Pancreas (tissue), 10 donors: ENCODE measurements at regions of chr3 and their contacts with region 1.

Region 1: GRCh38 chr3:42090973-42091731 is at the start of gene TRAK1:
- DNase-seq: no peak
- ATAC-seq: peak in 1 of 4 donors; percentile 37
- H3K4me3 ChIP-seq: no peak within 1 kb of the TSS
- H3K27ac ChIP-seq: no peak within 1 kb of the TSS
- H3K4me1 ChIP-seq: no peaks in the 10 kb centered on the region
- H3K27me3 ChIP-seq: no peaks in the 10 kb centered on the region
- CTCF ChIP-seq: no peak
- total RNA-seq, gene TRAK1: 9.3 to 24.3 (median 11.7) TPM

Region 2: GRCh38 chr3:41893977-41894376 is 197.2 kb before region 1 on chr3:
- intact Hi-C with region 1: loop called in 1 of 3 experiments (anchors 10 kb)
- DNase-seq: peak in 1 of 6 donors; percentile 10
- ATAC-seq: peak in 2 of 4 donors; percentile 42 to 67
- H3K4me3 ChIP-seq: no peak overlapping the region
- H3K27ac ChIP-seq: no peak overlapping the region
- H3K4me1 ChIP-seq: no peaks in the 10 kb centered on the region
- H3K27me3 ChIP-seq: no peaks in the 10 kb centered on the region
- CTCF ChIP-seq: peak in 2 of 4 donors; percentile 14 to 22

Region 3: DNA sequence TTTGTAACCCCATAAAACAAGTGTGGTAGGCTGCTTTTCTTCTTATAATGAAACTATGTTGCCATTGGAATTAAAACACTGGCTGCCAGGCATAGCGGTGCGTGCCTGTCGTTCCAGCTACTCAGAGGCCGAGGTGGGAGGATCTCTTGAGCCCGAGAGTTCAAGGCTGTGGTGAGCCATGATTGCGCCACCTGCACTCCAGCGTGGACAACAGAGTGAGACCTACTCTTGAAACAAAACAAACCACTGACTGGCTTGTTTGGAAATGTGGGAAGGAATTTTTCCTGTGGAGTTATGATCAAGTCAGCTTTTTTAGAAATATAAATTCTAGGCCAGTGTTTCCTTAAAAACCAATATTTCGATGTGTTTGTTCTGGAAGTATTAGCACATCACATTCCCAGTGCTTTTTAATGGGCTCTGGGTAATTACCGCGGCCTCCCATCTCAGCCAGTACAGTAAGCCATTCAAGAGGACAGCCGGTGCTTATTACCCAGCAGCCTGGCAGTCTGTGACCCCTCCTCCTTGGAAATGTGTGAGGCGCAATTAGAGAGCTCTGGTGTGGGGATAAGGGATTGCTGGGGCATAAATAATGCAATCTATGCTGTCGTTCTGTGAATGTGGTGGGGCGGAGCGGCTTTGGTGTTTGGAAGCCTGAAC is 58.3 kb before region 1 on chr3:
- intact Hi-C with region 1: loop called in 1 of 3 experiments (anchors 10 kb)
- DNase-seq: peak in 2 of 6 donors; percentile 35 to 41
- ATAC-seq: peak in 3 of 4 donors; percentile 59 to 76 (median 66)
- H3K4me3 ChIP-seq: no peak overlapping the region
- H3K27ac ChIP-seq: peak overlapping the region in 2 of 4 donors; percentile 23 to 34
- H3K4me1 ChIP-seq: peaks cover 0 to 12% (median 5%) of the 10 kb centered on the region in 3 donors
- H3K27me3 ChIP-seq: no peaks in the 10 kb centered on the region
- CTCF ChIP-seq: no peak